OCI-LY7 (cell line): ENCODE measurements at regions of chr5 and their contacts with region 1.

Region 1: GRCh38 chr5:144183254-144183889 is 12.7 kb downstream of the KCTD16 start:
- DNase-seq: peak; percentile 51
- H3K4me3 ChIP-seq: no peak overlapping the region
- H3K27ac ChIP-seq: no peak overlapping the region
- H3K4me1 ChIP-seq: peaks cover 19% of the 10 kb centered on the region
- CTCF ChIP-seq: peak; percentile 90

Region 2: GRCh38 chr5:143791848-143792731 is 391.3 kb before region 1 on chr5:
- CTCF ChIA-PET with region 1: no interaction called
- POLR2A ChIA-PET with region 1: no interaction called
- intact Hi-C with region 1: no loop called
- DNase-seq: no peak
- H3K4me3 ChIP-seq: no peak overlapping the region
- H3K27ac ChIP-seq: no peak overlapping the region
- H3K4me1 ChIP-seq: peaks cover 5% of the 10 kb centered on the region
- CTCF ChIP-seq: no peak

Region 3: DNA sequence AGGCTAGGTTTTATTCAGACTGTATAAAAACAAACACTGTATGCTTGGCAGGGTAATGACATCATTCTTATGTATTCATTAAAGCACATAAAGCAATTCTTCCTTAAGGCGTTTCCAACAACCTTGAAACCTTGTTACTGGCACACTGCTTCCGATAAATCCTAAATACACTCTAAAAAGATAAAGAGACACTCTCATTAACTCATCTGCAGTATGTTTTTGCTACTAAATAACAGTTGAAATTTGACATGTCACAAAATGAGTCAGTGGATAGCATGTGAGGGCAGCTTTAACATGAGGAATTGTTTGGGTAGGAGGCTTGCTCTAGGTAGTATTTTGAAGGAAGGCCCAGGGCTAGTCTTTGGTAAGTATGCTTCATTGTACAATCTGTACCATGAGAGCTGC is 26.6 kb before region 1 on chr5:
- CTCF ChIA-PET with region 1: no interaction called
- POLR2A ChIA-PET with region 1: no interaction called
- intact Hi-C with region 1: loop called (anchors 1 kb)
- DNase-seq: no peak
- H3K4me3 ChIP-seq: no peak overlapping the region
- H3K27ac ChIP-seq: no peak overlapping the region
- H3K4me1 ChIP-seq: no peaks in the 10 kb centered on the region
- CTCF ChIP-seq: no peak

Region 4: GRCh38 chr5:144170276-144171024 is 12.9 kb before region 1 on chr5 and contains the starts of genes KCTD16 and YIPF5:
- CTCF ChIA-PET with region 1: interaction called, 6 read pairs
- POLR2A ChIA-PET with region 1: interaction called, 58 read pairs
- intact Hi-C with region 1: no loop called
- DNase-seq: peak; percentile 97
- H3K4me3 ChIP-seq: peak within 1 kb of the TSS; percentile 77
- H3K27ac ChIP-seq: peak within 1 kb of the TSS; percentile 5
- H3K4me1 ChIP-seq: peaks cover 18% of the 10 kb centered on the region
- CTCF ChIP-seq: no peak
- total RNA-seq, gene KCTD16: 0.18 and 0.19 TPM in 2 replicates
- total RNA-seq, gene YIPF5: 8.8 and 11.9 TPM in 2 replicates

Region 5: GRCh38 chr5:144390133-144390532 is 206.8 kb after region 1 on chr5:
- CTCF ChIA-PET with region 1: no interaction called
- POLR2A ChIA-PET with region 1: no interaction called
- intact Hi-C with region 1: no loop called
- DNase-seq: no peak
- H3K4me3 ChIP-seq: no peak overlapping the region
- H3K27ac ChIP-seq: no peak overlapping the region
- H3K4me1 ChIP-seq: no peaks in the 10 kb centered on the region
- CTCF ChIP-seq: 0 out of 2 replicates have a peak, but pooled peaks have one; percentile 17